PC-9 (cell line): ENCODE measurements at regions of chr13 and their contacts with region 1.

Region 1: GRCh38 chr13:38582133-38582532 is 104.7 kb upstream of the FREM2 start:
- DNase-seq: peak; percentile 10 to 39
- H3K4me3 ChIP-seq: no peak overlapping the region
- H3K27ac ChIP-seq: no peak overlapping the region
- H3K4me1 ChIP-seq: no peaks in the 10 kb centered on the region
- H3K27me3 ChIP-seq: no peaks in the 10 kb centered on the region
- CTCF ChIP-seq: peak; percentile 66

Region 2: GRCh38 chr13:38617959-38618730 is 36.0 kb after region 1 on chr13:
- CTCF ChIA-PET with region 1: no interaction called
- POLR2A ChIA-PET with region 1: no interaction called
- intact Hi-C with region 1: no loop called
- DNase-seq: no peak
- H3K4me3 ChIP-seq: no peak overlapping the region
- H3K27ac ChIP-seq: no peak overlapping the region
- H3K4me1 ChIP-seq: no peaks in the 10 kb centered on the region
- H3K27me3 ChIP-seq: no peaks in the 10 kb centered on the region
- CTCF ChIP-seq: no peak

Region 3: GRCh38 chr13:38872693-38873092 is 290.6 kb after region 1 on chr13:
- CTCF ChIA-PET with region 1: no interaction called
- POLR2A ChIA-PET with region 1: no interaction called
- intact Hi-C with region 1: loop called (anchors 10 kb)
- DNase-seq: peak in 1 of 2 experiments; percentile 42
- H3K4me3 ChIP-seq: no peak overlapping the region
- H3K27ac ChIP-seq: no peak overlapping the region
- H3K4me1 ChIP-seq: no peaks in the 10 kb centered on the region
- H3K27me3 ChIP-seq: no peaks in the 10 kb centered on the region
- CTCF ChIP-seq: peak; percentile 69